Heart left ventricle (tissue), 16 donors: ENCODE measurements at regions of chr3 and their contacts with region 1.

Region 1: DNA sequence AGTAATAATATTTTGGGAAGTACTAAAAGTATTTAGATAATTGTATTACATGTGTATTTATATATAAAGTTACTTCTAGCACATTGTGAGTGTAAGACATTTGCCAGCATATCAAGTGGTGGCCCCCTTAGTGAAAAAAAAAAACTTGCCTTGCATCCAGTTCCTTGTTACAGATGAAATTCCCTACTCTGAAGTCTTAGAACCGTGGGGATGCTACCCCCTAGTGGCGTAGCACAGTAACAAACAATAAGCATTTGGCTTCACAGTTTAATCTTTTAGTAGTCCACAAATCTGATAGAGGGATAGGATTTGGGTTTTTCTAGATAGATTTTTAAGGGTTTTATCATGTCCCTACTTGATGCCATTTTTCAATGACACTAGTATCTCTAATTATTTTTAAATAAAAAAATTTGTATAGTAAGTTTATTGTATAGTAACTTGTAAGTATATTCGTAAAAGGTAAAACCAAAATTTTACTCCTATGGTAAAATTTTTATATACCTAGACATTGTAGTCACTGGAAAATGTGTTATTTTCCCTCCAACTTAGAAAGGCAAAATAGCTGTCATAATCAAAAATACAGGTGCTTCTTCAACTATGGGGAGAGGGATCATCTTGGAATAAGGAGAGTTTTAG is 14.3 kb downstream of the SMC4 start:
- DNase-seq: peak in 4 of 5 donors; percentile 41 to 61 (median 47)
- ATAC-seq: peak in 3 of 4 donors; percentile 62 to 65 (median 62)
- H3K4me3 ChIP-seq: no peak overlapping the region
- H3K27ac ChIP-seq: no peak overlapping the region
- H3K4me1 ChIP-seq: peaks cover 0 to 12% (median 0%) of the 10 kb centered on the region in 12 donors
- H3K27me3 ChIP-seq: no peaks in the 10 kb centered on the region
- CTCF ChIP-seq: peak; percentile 79 to 95 (median 90)
- POLR2A ChIP-seq: no peak

Region 2: DNA sequence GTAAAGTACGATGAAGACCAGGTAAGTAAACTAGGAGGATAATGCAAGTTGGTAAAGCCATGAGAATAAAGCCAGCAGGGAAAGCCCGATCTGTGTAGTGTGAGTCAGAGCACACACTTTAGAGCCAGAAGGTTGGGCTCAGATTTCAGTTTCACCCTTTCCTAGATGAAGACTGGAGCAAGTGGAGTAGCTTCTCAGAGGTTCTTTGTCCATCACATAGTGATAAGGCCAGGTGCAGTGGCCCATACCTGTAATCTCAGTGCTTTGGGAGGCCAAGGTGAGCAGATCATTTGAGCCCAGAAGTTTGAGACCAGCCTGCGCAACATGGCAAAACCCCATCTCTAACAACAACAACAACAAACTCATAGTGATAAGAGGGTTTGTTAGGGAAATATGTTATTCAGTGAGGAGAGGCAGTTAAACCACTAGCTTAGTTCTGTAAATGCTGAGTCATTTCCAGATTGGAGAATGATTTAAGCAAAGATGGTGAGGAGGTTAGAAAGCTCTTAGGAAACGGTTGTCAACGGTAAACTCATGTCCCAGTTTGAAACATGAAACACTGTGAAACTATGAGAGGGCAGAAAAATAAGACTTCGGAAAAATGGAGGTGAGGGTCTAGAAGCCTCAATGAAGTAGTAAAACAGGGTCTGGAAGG is 386.1 kb before region 1 on chr3:
- intact Hi-C with region 1: loop called in 9 of 10 experiments (anchors 1 to 5 kb)
- DNase-seq: no peak
- ATAC-seq: no peak
- H3K4me3 ChIP-seq: no peak overlapping the region
- H3K27ac ChIP-seq: no peak overlapping the region
- H3K4me1 ChIP-seq: peaks cover 0 to 5% (median 0%) of the 10 kb centered on the region in 12 donors
- H3K27me3 ChIP-seq: no peaks in the 10 kb centered on the region
- CTCF ChIP-seq: no peak
- POLR2A ChIP-seq: no peak

Region 3: DNA sequence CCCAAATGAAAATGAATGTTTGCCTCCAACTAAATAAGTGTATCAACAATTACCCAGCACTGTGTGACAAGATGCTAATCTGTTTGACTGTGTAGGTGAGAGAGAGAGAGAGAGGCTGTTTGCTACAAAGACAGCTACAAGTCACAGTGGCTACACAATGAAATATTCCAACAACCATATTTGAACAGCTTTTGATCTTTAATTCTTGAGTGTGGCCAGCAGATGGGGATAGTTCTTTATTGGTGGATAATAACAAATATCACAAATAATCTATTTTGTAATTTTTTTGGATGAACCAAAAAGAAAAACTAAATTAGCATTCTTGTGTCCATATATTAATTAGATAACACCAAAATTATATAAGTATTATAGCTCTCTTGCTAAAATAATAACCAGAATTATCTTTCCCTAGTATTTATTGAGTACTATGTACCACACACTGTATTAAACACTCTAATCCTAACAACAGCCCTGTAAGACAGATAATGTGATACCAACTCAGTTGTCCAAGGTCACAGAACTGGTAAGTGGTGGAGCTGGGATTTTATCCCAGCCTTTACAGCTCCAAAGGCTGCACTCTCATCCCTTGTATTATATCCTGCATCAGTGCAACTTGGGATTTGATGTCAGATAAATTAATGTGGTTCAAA is 250.4 kb before region 1 on chr3:
- intact Hi-C with region 1: loop called (anchors 2 to 10 kb)
- DNase-seq: no peak
- ATAC-seq: no peak
- H3K4me3 ChIP-seq: no peak overlapping the region
- H3K27ac ChIP-seq: no peak overlapping the region
- H3K4me1 ChIP-seq: no peaks in the 10 kb centered on the region
- H3K27me3 ChIP-seq: peaks cover 0 to 4% (median 0%) of the 10 kb centered on the region in 9 donors
- CTCF ChIP-seq: peak in 11 of 12 donors; percentile 20 to 63 (median 49)
- POLR2A ChIP-seq: no peak

Region 4: DNA sequence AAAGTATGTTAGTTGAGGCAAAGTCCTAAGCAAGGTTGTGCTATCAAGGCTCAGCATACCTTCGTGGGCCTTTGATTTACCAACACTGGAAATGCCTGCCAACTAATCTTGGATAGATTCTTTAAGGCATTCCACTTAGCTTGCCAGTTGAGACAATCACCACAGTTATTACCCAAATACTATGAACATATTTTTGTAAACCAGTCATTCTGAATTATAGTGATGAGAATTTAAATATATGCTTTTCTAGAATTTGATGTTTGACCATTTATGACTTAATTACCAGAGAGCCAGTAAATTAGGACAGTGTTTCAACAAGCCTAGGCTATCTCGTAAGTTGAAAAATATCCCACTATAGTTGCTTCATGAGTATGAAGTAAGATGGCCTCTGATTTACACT is 20.3 kb after region 1 on chr3:
- intact Hi-C with region 1: loop called in 1 of 10 experiments (anchors 2 kb)
- DNase-seq: no peak
- ATAC-seq: no peak
- H3K4me3 ChIP-seq: no peak overlapping the region
- H3K27ac ChIP-seq: no peak overlapping the region
- H3K4me1 ChIP-seq: no peaks in the 10 kb centered on the region
- H3K27me3 ChIP-seq: no peaks in the 10 kb centered on the region
- CTCF ChIP-seq: no peak
- POLR2A ChIP-seq: no peak